Heart right ventricle (tissue), 16 donors: ENCODE measurements at regions of chr9 and their contacts with region 1.

Region 1: GRCh38 chr9:30020161-30020560 is 2364.3 kb upstream of the ACO1 start:
- DNase-seq: no peak
- ATAC-seq: no peak
- H3K4me3 ChIP-seq: no peak overlapping the region
- H3K27ac ChIP-seq: no peak overlapping the region
- H3K4me1 ChIP-seq: no peaks in the 10 kb centered on the region
- H3K27me3 ChIP-seq: no peaks in the 10 kb centered on the region
- CTCF ChIP-seq: no peak

Region 2: DNA sequence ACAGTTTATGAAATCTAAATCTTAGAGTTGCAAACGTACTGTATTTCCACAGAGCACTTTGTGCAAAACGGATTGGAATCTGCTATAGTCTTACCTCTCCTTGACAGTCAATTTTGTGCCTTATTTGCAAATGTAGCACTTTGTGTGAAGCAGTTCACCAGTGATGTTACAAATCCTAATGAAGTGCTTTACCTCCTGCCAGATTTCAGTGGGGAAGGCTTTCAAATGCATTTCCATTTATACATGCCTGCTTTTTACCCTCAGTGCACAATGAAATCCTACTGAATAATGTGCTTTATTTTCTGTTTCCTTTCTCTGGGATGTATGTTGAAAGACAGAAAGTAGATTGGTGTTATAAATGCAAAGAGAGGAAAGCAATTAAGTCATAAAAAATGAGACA is 305.3 kb before region 1 on chr9:
- intact Hi-C with region 1: loop called in 1 of 10 experiments (anchors 5 kb)
- DNase-seq: no peak
- ATAC-seq: no peak
- H3K4me3 ChIP-seq: no peak overlapping the region
- H3K27ac ChIP-seq: no peak overlapping the region
- H3K4me1 ChIP-seq: no peaks in the 10 kb centered on the region
- H3K27me3 ChIP-seq: no peaks in the 10 kb centered on the region
- CTCF ChIP-seq: no peak

Region 3: DNA sequence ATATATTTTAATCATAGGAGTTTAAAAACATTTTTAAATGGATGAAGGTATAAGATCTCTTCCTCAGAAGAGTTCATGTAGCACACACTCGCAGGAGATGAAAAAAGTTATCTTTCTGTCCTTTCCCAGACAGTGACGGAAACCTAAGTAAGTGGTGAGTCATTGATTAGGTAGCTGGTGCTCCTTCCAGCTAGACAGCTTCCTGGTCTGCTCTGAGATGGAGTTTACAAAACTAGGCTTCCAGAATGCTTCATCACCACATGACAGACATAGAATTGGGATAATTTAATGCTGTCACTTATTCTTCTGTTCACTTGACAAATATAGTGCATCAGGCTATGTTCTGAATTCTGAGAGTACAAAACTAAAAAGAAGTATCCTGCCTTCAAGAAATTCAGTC is 53.9 kb before region 1 on chr9:
- intact Hi-C with region 1: loop called in 1 of 10 experiments (anchors 10 kb)
- DNase-seq: no peak
- ATAC-seq: no peak
- H3K4me3 ChIP-seq: no peak overlapping the region
- H3K27ac ChIP-seq: no peak overlapping the region
- H3K4me1 ChIP-seq: no peaks in the 10 kb centered on the region
- H3K27me3 ChIP-seq: no peaks in the 10 kb centered on the region
- CTCF ChIP-seq: no peak

Region 4: GRCh38 chr9:29981013-29981412 is 39.1 kb before region 1 on chr9:
- intact Hi-C with region 1: no loop called
- DNase-seq: no peak
- ATAC-seq: no peak
- H3K4me3 ChIP-seq: no peak overlapping the region
- H3K27ac ChIP-seq: no peak overlapping the region
- H3K4me1 ChIP-seq: no peaks in the 10 kb centered on the region
- H3K27me3 ChIP-seq: no peaks in the 10 kb centered on the region
- CTCF ChIP-seq: no peak

Region 5: GRCh38 chr9:30609713-30610112 is 589.6 kb after region 1 on chr9:
- intact Hi-C with region 1: no loop called
- DNase-seq: no peak
- ATAC-seq: no peak
- H3K4me3 ChIP-seq: no peak overlapping the region
- H3K27ac ChIP-seq: no peak overlapping the region
- H3K4me1 ChIP-seq: no peaks in the 10 kb centered on the region
- H3K27me3 ChIP-seq: no peaks in the 10 kb centered on the region
- CTCF ChIP-seq: no peak

Region 6: GRCh38 chr9:31969552-31969951 is 1949.4 kb after region 1 on chr9:
- intact Hi-C with region 1: no loop called
- DNase-seq: no peak
- ATAC-seq: no peak
- H3K4me3 ChIP-seq: no peak overlapping the region
- H3K27ac ChIP-seq: no peak overlapping the region
- H3K4me1 ChIP-seq: no peaks in the 10 kb centered on the region
- H3K27me3 ChIP-seq: no peaks in the 10 kb centered on the region
- CTCF ChIP-seq: no peak